ENCODE measurements at regions of chr7 and their contacts with region 1.

Region 1: DNA sequence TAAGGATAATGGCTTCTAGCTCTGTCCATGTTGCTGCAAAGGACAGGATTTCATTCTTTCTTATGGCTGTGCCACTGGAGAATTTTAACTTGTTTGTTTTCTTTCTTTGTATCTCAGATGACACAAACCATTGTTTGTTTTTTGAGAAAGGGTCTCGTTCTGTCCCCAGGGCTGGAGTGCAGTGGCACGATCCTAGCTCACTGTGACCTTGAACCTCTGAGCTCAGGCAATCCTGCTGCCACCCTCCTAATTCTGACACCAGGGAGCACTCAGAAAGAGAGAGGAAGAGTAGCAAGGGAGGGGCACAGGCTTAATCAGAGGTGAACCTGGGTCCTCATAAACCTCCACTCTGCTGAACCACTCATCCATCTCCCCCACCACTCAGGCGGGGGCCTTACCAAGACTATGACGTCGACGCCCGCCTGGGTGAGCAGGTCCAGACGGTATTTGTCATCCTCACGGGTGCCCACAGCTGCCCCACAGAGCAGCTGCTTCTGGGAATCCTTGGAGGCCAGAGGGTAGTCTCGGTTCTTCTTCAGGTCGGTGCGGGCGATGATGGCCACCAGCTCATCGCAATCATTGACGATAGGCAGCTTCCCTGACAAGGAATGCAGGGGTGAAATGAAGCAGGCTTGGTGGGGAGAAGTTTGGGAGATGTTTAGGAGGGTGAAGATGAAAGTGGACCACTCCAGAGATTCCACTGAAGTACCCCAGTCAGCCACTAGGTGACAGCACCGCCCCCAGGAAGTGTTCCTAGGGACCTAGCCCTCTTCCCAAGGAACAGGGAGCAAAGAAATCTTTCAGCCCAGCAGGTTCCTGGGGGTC is 11.6 kb downstream of the IMPDH1 start:
- DNase-seq: peak; percentile 52 to 74
- ATAC-seq: peak; percentile 83 to 92
- H3K4me3 ChIP-seq: no peak overlapping the region
- H3K27ac ChIP-seq: no peak overlapping the region
- H3K4me1 ChIP-seq: no peaks in the 10 kb centered on the region
- CTCF ChIP-seq: peak; percentile 86
- EP300 ChIP-seq: no peak
- POLR2A ChIP-seq: no peak
- RAD21 ChIP-seq: peak; percentile 74 to 80

Region 2: DNA sequence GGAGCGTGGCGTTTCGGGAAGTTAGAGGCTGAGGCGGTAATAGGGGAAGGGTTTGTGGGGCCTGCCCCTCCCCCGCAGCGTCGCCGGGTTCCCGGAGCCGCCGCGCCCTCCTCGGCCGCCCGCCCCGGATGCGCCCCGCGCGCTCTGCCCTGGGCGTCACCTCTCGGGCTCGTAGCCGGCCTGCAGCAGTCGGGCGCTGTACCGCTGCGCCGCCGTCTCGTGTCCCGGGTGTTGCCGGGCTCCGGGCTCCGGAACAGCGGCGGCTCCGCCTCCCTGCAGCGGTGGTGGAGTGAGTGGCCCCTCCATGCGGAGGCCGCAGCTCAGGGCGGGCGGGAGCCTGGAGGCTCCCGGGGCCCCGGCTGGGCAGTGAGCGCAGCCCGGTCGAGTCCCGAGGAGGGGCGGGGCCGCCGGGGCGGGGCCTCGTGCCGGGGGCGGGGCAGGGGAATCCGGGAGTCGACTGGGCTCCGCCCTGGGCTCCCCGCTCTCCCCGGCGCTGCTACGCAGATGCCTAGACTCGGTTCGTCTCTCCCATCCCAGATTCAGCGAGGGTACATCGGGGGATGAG is 11.4 kb after region 1 on chr7 and contains the start of gene IMPDH1:
- CTCF ChIA-PET with region 1: interaction called, 695 read pairs
- POLR2A ChIA-PET with region 1: no interaction called
- DNase-seq: peak; percentile 74 to 93
- ATAC-seq: peak; percentile 76 to 91
- H3K4me3 ChIP-seq: peak within 1 kb of the TSS; percentile 69
- H3K27ac ChIP-seq: peak within 1 kb of the TSS; percentile 84 to 94
- H3K4me1 ChIP-seq: peaks cover 31% of the 10 kb centered on the region
- CTCF ChIP-seq: no peak
- EP300 ChIP-seq: no peak
- POLR2A ChIP-seq: peak; percentile 83
- RAD21 ChIP-seq: no peak
- polyA plus RNA-seq, gene IMPDH1: 55.4 and 83.3 TPM in 2 replicates